ENCODE measurements at regions of chr14 and their contacts with region 1.

Region 1: GRCh38 chr14:32846821-32847365 is 91.8 kb upstream of the NPAS3 start:
- DNase-seq: no peak
- H3K4me3 Mint-ChIP-seq: no peak overlapping the region
- H3K27ac Mint-ChIP-seq: no peak overlapping the region
- H3K4me1 Mint-ChIP-seq: no peaks in the 10 kb centered on the region
- H3K27me3 Mint-ChIP-seq: no peaks in the 10 kb centered on the region

Region 2: DNA sequence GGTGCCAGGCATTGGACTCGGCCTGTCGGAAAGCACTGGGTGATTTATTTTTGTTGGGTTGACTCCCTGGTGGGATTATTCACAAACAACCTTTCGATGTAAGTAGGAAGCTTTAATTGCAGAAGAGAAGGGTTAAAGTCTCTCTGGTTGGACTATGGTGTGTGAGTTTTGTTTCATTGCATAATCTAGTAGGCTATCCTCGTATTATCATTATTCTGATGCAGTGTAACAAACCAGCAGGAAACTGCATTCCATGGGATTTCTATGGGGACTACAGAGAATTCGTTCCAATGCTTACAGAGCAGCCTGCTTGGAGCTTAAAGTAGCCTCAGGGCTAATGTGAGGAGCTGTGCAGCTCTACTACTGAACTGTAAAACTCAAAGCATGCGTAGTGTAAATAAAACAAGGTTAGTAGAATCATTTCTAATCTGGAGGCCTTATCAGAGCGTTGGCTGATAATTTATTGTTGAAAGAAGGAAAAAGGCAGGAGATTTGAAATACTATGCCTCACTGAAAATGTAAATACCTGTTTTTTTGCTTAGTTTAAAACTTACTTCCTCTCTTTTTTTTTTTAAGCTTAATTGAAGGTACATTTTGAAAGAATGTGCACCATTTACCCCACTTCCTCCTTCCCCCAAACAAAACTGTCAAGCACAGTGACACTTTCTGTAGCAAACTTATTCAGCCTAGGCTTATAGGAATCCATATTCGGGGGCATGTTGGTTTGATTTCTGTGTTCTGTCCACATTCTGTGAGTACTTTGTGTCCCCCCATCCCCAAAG is 318.4 kb after region 1 on chr14:
- intact Hi-C with region 1: loop called (anchors 5 kb)
- DNase-seq: no peak
- H3K4me3 Mint-ChIP-seq: no peak overlapping the region
- H3K27ac Mint-ChIP-seq: no peak overlapping the region
- H3K4me1 Mint-ChIP-seq: no peaks in the 10 kb centered on the region
- H3K27me3 Mint-ChIP-seq: no peaks in the 10 kb centered on the region

Measured in activated T-helper 1 cell treated with anti-CD3 and anti-CD28 coated beads, Interleukin-12 subunit alpha, Interleukin-12 subunit beta, Interleukin-2, Interleukin-4 antibody, amounts not matched to agents 30 ng/mL and 10 ng/mL and 1 ng/mL, durations not matched to agents 14 hours and 24 hours and 36 hours (primary cell).